Activated CD8-positive, alpha-beta memory T cell treated with anti-CD3 and anti-CD28 coated beads, Interleukin-2, amount 10 ng/mL, durations not matched to agents 7 days and 5 days (primary cell): ENCODE measurements at regions of chr16 and their contacts with region 1.

Region 1: DNA sequence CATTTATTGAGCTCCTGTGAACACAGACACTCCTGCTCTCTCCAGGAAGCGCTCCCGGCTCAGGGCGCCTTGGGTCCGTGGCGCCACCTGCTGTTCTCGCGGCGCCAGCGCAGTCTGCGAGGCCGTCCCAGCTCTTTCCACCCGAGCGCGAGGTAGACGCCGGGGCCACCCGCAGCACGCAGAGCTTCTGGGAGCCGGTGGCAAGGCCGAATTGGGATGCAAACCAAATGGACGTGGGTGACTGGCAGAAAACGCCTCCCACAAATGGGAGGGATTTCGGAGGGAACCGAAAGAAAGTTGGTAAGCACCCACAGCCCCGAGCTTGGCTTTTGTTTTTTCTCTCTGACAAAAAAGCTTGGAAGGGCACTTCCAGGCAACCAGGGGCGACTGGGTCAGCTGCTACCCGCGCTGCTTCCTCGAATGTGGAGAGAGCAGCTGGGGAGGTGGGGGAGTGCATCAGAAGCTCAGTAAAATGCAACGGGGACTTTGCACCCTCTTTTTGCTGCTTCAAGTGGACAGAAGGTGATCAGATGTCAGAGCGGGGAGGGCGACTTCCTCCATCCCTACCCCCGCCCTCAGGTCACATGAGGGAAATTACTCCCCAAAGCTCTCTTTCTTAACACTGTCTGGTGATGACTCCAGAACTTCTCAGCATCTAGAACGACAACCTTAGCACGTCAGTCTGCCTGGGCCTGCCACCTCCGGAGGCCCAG is 13.5 kb upstream of the N4BP1 start:
- DNase-seq: peak; percentile 85
- ATAC-seq: peak; percentile 99
- H3K4me3 Mint-ChIP-seq: peak overlapping the region; percentile 70
- H3K27ac Mint-ChIP-seq: peak overlapping the region; percentile 63
- H3K4me1 Mint-ChIP-seq: peaks cover 39% of the 10 kb centered on the region
- H3K27me3 Mint-ChIP-seq: peaks cover 6% of the 10 kb centered on the region

Region 2: DNA sequence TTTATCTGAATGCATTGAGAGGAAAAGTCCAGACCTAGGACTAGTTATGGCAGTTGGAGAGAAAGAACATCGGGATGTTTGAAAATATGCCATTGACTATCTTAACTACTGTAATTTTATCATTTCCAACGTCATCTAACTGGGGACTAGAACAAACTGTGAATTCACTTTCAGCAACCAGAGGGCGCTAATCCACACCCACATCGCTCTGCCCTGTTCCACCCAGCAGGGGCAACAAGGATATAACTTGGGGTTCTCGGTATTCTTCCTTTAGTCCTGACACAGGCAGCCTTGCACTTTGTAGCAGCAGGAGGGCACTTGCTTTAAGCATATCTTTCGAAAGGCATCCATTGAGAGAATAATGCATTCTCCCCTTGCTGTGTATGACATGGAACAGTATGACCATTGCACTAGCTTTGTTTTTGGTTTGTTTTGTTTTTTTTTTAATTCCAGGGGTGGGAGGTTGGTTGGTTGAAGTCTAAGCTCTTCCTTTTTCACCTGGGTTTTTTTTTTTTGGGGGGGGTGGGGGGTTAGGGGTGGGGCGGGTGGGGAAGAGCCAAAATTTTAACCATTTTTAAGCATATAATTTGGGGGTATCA is 269.8 kb before region 1 on chr16:
- CTCF ChIA-PET with region 1: interaction called, 51 read pairs
- DNase-seq: peak; percentile 80
- ATAC-seq: peak; percentile 95
- H3K4me3 Mint-ChIP-seq: no peak overlapping the region
- H3K27ac Mint-ChIP-seq: peak overlapping the region; percentile 36
- H3K4me1 Mint-ChIP-seq: peaks cover 12% of the 10 kb centered on the region
- H3K27me3 Mint-ChIP-seq: no peaks in the 10 kb centered on the region

Region 3: GRCh38 chr16:48378836-48379235 is 244.6 kb before region 1 on chr16:
- CTCF ChIA-PET with region 1: interaction called, 16 read pairs
- DNase-seq: no peak
- ATAC-seq: no peak
- H3K4me3 Mint-ChIP-seq: no peak overlapping the region
- H3K27ac Mint-ChIP-seq: no peak overlapping the region
- H3K4me1 Mint-ChIP-seq: peaks cover 40% of the 10 kb centered on the region
- H3K27me3 Mint-ChIP-seq: no peaks in the 10 kb centered on the region

Region 4: DNA sequence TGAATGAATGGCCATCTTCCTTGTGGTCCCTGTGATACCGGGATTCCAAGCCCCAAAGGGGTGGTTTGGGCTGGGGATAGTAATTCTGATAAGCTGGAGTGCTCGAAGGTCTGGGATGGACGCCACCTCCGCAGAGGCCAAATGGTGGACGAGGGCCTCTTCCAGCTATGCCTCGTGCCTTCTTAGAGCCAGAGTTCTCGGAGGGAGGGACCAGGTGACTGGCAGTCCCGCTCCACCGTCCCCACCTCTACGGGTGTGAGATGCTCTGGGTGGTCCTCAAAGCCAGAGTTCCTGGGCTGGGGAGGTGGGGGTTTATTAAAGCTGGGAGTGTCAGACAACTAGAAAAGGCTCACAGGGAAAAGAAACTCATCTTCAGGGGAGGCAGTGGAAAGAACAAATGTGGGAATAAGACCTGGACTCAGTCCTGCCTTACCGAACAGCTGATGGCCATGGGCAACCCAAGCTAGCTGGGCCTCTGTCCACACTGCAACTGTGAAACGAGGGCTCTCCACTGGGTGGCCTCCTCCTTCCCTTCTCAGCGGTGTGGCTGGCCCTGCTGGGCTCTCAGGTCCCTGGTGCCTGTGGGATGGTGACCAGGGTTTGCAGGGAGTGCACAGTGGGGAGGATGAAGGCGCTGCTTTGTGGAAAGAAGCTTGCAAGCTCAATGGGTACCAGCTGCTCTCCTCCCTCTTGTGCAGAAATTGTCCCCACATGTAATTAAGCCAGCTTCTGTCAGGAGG is 88.7 kb before region 1 on chr16:
- CTCF ChIA-PET with region 1: interaction called, 13 read pairs
- DNase-seq: no peak
- ATAC-seq: no peak
- H3K4me3 Mint-ChIP-seq: no peak overlapping the region
- H3K27ac Mint-ChIP-seq: no peak overlapping the region
- H3K4me1 Mint-ChIP-seq: peaks cover 25% of the 10 kb centered on the region
- H3K27me3 Mint-ChIP-seq: no peaks in the 10 kb centered on the region

Region 5: DNA sequence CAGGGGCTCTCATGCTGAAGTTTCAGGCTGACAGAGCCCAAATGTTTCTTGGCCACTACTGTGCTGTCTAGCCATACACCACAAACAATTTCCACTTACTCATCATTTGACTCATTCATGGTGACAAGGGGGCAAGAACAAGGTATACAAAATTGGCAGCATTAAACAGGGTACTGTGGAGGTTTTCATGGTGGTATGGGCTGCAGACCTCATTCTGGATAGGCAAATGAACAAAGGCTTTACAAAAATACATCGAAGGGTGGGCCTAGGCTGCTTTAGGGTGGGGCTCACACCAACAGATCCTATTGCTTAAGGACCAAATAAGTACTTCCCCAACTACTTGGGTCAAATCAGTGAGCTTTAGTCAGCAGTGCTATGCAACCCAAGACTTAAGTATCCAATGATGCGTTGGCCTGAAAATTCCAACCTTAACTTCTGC is 66.5 kb before region 1 on chr16:
- CTCF ChIA-PET with region 1: interaction called, 17 read pairs
- DNase-seq: peak; percentile 63
- ATAC-seq: peak; percentile 89
- H3K4me3 Mint-ChIP-seq: no peak overlapping the region
- H3K27ac Mint-ChIP-seq: peak overlapping the region; percentile 82
- H3K4me1 Mint-ChIP-seq: peaks cover 78% of the 10 kb centered on the region
- H3K27me3 Mint-ChIP-seq: no peaks in the 10 kb centered on the region

Region 6: GRCh38 chr16:48609652-48610029 is 13.8 kb before region 1 on chr16:
- CTCF ChIA-PET with region 1: interaction called, 107 read pairs
- DNase-seq: no peak
- ATAC-seq: peak; percentile 49
- H3K4me3 Mint-ChIP-seq: no peak overlapping the region
- H3K27ac Mint-ChIP-seq: no peak overlapping the region
- H3K4me1 Mint-ChIP-seq: peaks cover 45% of the 10 kb centered on the region
- H3K27me3 Mint-ChIP-seq: no peaks in the 10 kb centered on the region

Region 7: DNA sequence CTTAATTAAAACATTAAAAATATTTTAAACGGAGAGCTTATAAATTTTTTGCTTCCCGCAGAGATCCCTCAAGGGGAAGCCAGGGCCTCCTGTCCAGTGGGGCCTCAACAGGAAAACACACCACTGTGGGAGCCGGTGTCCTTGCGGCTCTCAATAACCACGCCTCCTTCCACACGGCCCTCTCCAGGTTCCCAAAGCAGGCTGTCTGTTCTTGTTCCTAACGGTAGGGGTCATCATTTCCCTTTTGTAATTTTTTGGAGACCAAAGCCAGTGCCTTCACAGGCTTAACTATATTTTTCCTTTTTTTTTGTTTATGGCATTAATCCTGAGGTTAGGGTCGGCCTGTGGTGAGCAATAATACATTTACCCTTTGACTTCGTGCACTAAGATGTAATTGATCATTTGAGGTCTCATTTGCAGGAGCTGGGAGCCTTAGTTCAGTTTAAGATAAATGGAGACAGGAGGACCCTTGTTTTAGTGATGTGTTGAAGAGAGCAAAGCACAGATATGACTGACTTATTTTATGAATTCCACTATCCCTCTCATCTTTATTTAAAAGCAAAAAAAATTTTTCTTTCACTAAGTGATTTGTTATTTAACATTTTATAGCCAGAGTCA is 64.1 kb after region 1 on chr16:
- CTCF ChIA-PET with region 1: no interaction called
- DNase-seq: peak; percentile 57
- ATAC-seq: peak; percentile 64
- H3K4me3 Mint-ChIP-seq: no peak overlapping the region
- H3K27ac Mint-ChIP-seq: no peak overlapping the region
- H3K4me1 Mint-ChIP-seq: no peaks in the 10 kb centered on the region
- H3K27me3 Mint-ChIP-seq: peaks cover 20% of the 10 kb centered on the region

Region 8: GRCh38 chr16:48831076-48831722 is 207.7 kb after region 1 on chr16:
- CTCF ChIA-PET with region 1: no interaction called
- DNase-seq: no peak
- ATAC-seq: no peak
- H3K4me3 Mint-ChIP-seq: no peak overlapping the region
- H3K27ac Mint-ChIP-seq: no peak overlapping the region
- H3K4me1 Mint-ChIP-seq: no peaks in the 10 kb centered on the region
- H3K27me3 Mint-ChIP-seq: no peaks in the 10 kb centered on the region